Thyroid gland (tissue), 4 donors: ENCODE measurements at regions of chr16 and their contacts with region 1.

Region 1: DNA sequence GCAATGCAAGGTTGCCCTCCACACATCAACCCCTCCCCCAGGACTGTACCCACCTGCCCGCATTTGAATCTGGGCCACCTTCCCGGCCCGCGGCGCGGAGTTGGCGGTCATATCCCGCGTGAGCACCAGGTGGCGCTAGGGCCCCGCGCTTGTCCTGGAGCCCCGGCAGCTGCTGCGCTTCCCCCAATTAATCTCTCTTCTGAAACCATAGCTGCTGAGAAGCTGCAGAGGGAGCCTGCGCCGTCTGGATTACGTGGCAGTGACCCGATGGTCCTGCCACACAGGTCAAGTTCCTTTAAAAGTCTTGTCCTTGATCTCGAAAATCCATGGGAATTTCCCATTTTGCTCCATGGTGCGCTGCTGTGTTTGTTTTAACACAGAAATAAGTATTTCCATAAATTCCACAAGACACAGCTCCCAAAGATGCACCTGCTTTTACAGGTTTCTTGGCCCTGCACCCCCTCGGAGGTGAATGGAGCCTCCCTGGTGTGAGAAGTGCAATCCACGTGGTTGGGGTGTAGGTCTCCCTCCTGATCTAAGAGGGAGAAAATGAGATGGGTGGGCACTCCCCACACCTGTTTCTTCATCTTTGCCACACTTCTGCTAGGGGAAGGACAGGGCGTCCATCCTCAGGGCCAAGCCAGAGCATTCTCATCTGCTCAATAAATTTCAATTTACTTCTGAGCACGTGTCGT is 22.1 kb downstream of the COX4I1 start:
- DNase-seq: peak; percentile 75 to 76
- H3K4me3 ChIP-seq: no peak overlapping the region
- H3K27ac ChIP-seq: no peak overlapping the region
- H3K4me1 ChIP-seq: peaks cover 0 to 9% of the 10 kb centered on the region in 2 donors
- H3K27me3 ChIP-seq: no peaks in the 10 kb centered on the region
- CTCF ChIP-seq: peak; percentile 95 to 99 (median 96)
- POLR2A ChIP-seq: no peak

Region 2: GRCh38 chr16:85986931-85987749 is 165.6 kb after region 1 on chr16:
- intact Hi-C with region 1: loop called (anchors 5 kb)
- DNase-seq: no peak
- H3K4me3 ChIP-seq: no peak overlapping the region
- H3K27ac ChIP-seq: no peak overlapping the region
- H3K4me1 ChIP-seq: peaks cover 0 to 10% of the 10 kb centered on the region in 2 donors
- H3K27me3 ChIP-seq: no peaks in the 10 kb centered on the region
- CTCF ChIP-seq: peak in 4 of 6 experiments; percentile 22 to 74 (median 36)
- POLR2A ChIP-seq: no peak

Region 3: GRCh38 chr16:86015606-86016005 is 194.0 kb after region 1 on chr16:
- intact Hi-C with region 1: loop called (anchors 2 kb)
- DNase-seq: no peak
- H3K4me3 ChIP-seq: no peak overlapping the region
- H3K27ac ChIP-seq: no peak overlapping the region
- H3K4me1 ChIP-seq: no peaks in the 10 kb centered on the region
- H3K27me3 ChIP-seq: no peaks in the 10 kb centered on the region
- CTCF ChIP-seq: no peak
- POLR2A ChIP-seq: no peak